IMR-90 (cell line): ENCODE measurements at regions of chr4 and their contacts with region 1.

Region 1: GRCh38 chr4:72019688-72020087 is 12.1 kb upstream of the NPFFR2 start:
- DNase-seq: no peak
- ATAC-seq: no peak
- H3K4me3 ChIP-seq: no peak overlapping the region
- H3K27ac ChIP-seq: no peak overlapping the region
- H3K4me1 ChIP-seq: no peaks in the 10 kb centered on the region
- H3K27me3 ChIP-seq: no peaks in the 10 kb centered on the region
- CTCF ChIP-seq: no peak
- POLR2A ChIP-seq: no peak
- RAD21 ChIP-seq: no peak

Region 2: DNA sequence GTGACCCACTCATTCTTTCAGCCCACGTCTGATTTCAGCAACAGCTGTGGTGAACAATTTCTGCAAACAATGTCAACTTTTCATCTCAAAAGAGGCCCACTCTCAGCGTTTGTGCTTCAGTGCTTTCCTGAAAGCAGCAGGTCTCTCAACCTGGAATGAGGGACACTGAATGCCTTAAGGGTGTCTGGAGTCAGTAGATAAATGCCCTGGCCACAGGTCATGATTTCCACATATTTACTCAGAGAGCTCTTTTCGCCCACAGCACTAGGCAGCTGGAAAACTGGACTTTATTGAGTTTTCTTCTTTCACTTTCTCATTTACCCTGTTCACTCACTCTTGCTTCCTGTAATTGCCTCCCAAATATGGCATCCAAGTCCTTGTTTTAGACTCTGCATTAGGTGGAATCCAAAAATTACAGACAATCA is 64.9 kb after region 1 on chr4:
- CTCF ChIA-PET with region 1: no interaction called
- POLR2A ChIA-PET with region 1: no interaction called
- dilution Hi-C with region 1: no loop called
- in situ Hi-C with region 1: no loop called
- intact Hi-C with region 1: loop called (anchors 2 kb)
- DNase-seq: no peak
- ATAC-seq: no peak
- H3K4me3 ChIP-seq: no peak overlapping the region; the same call in 1 of the 2 replicates
- H3K27ac ChIP-seq: no peak overlapping the region
- H3K4me1 ChIP-seq: no peaks in the 10 kb centered on the region
- H3K27me3 ChIP-seq: no peaks in the 10 kb centered on the region
- CTCF ChIP-seq: no peak
- POLR2A ChIP-seq: no peak
- RAD21 ChIP-seq: no peak